Activated T-helper 2 cell treated with anti-CD3 and anti-CD28 coated beads, Interferon-gamma antibody, Interleukin-2, Interleukin-4, amounts not matched to agents 10 μg/mL and 5 μg/mL and 100 μg/mL, durations not matched to agents 14 hours and 24 hours and 36 hours (primary cell): ENCODE measurements at regions of chr19 and their contacts with region 1.

Region 1: GRCh38 chr19:44212250-44212865 is at the start of gene ZNF227:
- DNase-seq: peak; percentile 70
- H3K4me3 Mint-ChIP-seq: peak within 1 kb of the TSS; percentile 92
- H3K27ac Mint-ChIP-seq: peak within 1 kb of the TSS; percentile 85
- H3K4me1 Mint-ChIP-seq: peaks cover 16% of the 10 kb centered on the region
- H3K27me3 Mint-ChIP-seq: no peaks in the 10 kb centered on the region
- total RNA-seq, gene ZNF227: 17.6 and 17.7 TPM in 2 replicates

Region 2: GRCh38 chr19:44113138-44113783 is 99.1 kb before region 1 on chr19 and contains the start of gene ZNF225:
- intact Hi-C with region 1: loop called (anchors 2 kb)
- DNase-seq: peak; percentile 81
- H3K4me3 Mint-ChIP-seq: peak within 1 kb of the TSS; percentile 99
- H3K27ac Mint-ChIP-seq: peak within 1 kb of the TSS; percentile 82
- H3K4me1 Mint-ChIP-seq: peaks cover 14% of the 10 kb centered on the region
- H3K27me3 Mint-ChIP-seq: no peaks in the 10 kb centered on the region
- total RNA-seq, gene ZNF225: 3.5 and 3.6 TPM in 2 replicates